ENCODE measurements at regions of chr12 and their contacts with region 1.

Region 1: DNA sequence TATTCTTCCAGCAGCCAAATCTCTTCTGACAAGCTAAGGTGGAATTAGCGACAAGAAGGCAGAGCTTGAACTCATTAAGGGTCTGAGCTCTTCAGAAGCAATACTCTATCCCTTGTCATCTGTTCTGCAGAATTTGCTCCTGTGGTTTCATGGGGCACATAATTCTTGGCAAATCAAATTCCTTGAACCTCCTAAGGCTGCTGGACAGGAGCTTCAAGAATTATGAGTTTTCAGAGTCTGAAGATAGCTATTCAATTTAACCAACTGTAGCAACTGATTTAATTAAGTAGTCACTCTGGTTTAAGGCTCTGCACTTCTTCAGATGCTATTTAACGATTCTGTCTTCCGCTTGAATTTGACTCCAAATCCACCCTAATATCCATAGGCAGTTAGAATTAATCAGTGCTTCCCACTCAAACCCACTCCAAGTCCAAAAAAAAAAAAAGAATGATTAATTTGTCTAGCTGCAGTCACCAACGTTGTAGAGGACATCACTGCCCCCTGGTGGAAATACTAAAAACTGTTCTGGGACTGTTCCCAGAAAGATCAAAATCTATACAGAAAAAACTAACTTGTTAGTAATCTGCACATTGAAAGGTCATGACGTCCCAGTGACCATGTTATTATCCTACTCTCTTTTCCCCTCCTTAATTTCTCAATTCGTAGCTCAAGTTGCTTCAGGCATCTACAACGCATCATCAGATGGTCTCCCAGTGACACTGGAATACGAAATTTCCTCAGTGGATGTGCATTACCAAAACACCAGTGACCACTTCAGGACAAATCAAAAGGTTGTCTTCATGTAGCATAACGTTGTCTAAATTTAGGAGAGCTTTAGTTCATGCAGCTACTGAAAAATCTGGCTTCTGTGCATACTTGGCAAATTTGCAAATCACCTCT is 169.8 kb downstream of the KIF21A start:
- DNase-seq: peak in 1 of 6 donors; percentile 43
- ATAC-seq: peak in 3 of 4 donors; percentile 65 to 66 (median 65)
- H3K4me3 ChIP-seq: no peak overlapping the region
- H3K27ac ChIP-seq: no peak overlapping the region
- H3K4me1 ChIP-seq: no peaks in the 10 kb centered on the region
- H3K27me3 ChIP-seq: no peaks in the 10 kb centered on the region
- CTCF ChIP-seq: peak in 3 of 4 donors; percentile 58 to 82 (median 76)

Region 2: GRCh38 chr12:38921025-38921677 is 352.0 kb before region 1 on chr12:
- intact Hi-C with region 1: loop called in 1 of 3 experiments (anchors 10 kb)
- DNase-seq: peak in 4 of 6 donors; percentile 12 to 65 (median 20)
- ATAC-seq: peak in 3 of 4 donors; percentile 81 to 86 (median 82)
- H3K4me3 ChIP-seq: no peak overlapping the region
- H3K27ac ChIP-seq: no peak overlapping the region
- H3K4me1 ChIP-seq: no peaks in the 10 kb centered on the region
- H3K27me3 ChIP-seq: peaks cover 0 to 4% (median 0%) of the 10 kb centered on the region in 4 donors
- CTCF ChIP-seq: peak in 3 of 4 donors; percentile 19 to 46 (median 30)